Pancreas (tissue), 10 donors: ENCODE measurements at regions of chr15 and their contacts with region 1.

Region 1: GRCh38 chr15:68550481-68551295 is 28.1 kb upstream of the CORO2B start:
- DNase-seq: peak; percentile 52 to 94 (median 80)
- ATAC-seq: peak; percentile 69 to 94 (median 82)
- H3K4me3 ChIP-seq: no peak overlapping the region
- H3K27ac ChIP-seq: no peak overlapping the region
- H3K4me1 ChIP-seq: no peaks in the 10 kb centered on the region
- H3K27me3 ChIP-seq: no peaks in the 10 kb centered on the region
- CTCF ChIP-seq: peak; percentile 89 to 96 (median 92)

Region 2: DNA sequence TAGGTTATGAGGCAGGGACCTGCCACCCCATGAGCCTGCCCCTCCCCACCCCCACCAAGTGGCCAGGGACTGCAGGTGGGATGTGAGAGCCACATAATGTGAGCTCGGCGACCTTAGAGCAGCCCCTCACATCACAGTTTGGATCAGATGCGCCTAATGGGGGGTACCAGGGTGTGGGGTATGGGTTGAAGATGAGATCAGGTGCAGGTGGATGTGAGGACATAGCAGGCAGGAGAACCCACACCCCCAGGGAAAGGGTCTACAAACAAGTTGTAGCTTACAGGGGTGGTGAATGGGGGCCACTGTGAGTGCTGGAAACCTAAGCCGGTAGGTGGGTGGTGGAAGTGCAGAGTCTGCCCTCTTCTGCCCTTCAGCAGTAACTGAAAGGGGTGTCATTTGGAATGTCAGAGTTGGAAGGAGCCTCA is 122.1 kb after region 1 on chr15:
- intact Hi-C with region 1: loop called in 2 of 3 experiments (anchors 5 kb)
- DNase-seq: no peak
- ATAC-seq: peak in 1 of 4 donors; percentile 29
- H3K4me3 ChIP-seq: no peak overlapping the region
- H3K27ac ChIP-seq: no peak overlapping the region
- H3K4me1 ChIP-seq: no peaks in the 10 kb centered on the region
- H3K27me3 ChIP-seq: no peaks in the 10 kb centered on the region
- CTCF ChIP-seq: no peak